PC-9 (cell line): ENCODE measurements at regions of chr1 and their contacts with region 1.

Region 1: GRCh38 chr1:226062558-226063223 is at the start of gene H3-3A:
- DNase-seq: peak; percentile 78 to 99
- H3K4me3 ChIP-seq: peak within 1 kb of the TSS; percentile 95
- H3K27ac ChIP-seq: peak within 1 kb of the TSS; percentile 94
- H3K4me1 ChIP-seq: peaks cover 23% of the 10 kb centered on the region
- H3K27me3 ChIP-seq: no peaks in the 10 kb centered on the region
- CTCF ChIP-seq: 0 out of 2 replicates have a peak, but pooled peaks have one; percentile 11
- total RNA-seq, gene H3-3A: 404 and 584 TPM in 2 replicates

Region 2: DNA sequence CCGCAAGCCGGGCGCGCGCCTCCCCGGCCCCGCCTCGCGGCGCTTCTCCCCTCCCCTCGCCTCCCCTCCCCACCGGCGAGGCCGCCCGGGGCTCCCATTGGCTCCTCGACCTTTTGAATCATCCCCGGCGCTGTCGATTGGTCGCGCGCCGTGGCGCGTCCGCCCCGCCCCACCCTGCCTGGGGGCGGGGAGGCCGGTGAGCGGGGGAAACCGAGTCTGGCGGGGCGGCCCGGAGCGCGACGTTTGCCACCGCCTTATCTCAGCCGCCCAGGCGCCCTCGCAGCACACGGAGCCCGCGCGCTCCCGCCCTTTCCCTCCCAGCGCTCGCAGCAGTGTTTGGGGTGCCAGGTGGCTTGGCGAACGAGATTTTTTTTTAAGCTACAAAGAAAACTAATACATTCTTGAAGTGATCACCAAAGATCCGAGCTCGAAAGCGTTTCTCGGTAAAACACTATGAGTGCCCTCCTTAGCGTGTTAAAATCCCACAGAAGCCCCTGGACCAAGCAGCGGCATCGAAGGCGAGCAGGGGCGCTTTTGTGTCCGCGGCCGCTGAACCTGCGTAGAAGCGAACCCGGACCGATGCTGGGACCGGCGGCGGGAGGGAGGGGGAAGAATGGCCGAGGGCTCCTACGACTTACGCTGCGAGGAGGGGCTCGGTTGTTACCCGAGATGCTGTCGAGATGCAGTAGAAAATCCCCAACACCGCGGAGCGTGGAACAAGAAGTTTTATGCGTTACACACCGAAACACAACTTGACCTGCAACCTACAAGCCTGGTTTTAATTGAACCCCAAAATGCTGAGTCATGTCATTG is 634.4 kb before region 1 on chr1:
- CTCF ChIA-PET with region 1: interaction called, 3 read pairs
- POLR2A ChIA-PET with region 1: interaction called, 6 read pairs
- intact Hi-C with region 1: loop called (anchors 5 kb)
- DNase-seq: peak; percentile 87 to 95
- H3K4me3 ChIP-seq: peak overlapping the region; percentile 94
- H3K27ac ChIP-seq: peak overlapping the region; percentile 98
- H3K4me1 ChIP-seq: peaks cover 44% of the 10 kb centered on the region
- H3K27me3 ChIP-seq: no peaks in the 10 kb centered on the region
- CTCF ChIP-seq: no peak

Region 3: GRCh38 chr1:225777583-225778336 is 284.9 kb before region 1 on chr1 and contains the start of gene SRP9:
- CTCF ChIA-PET with region 1: no interaction called
- POLR2A ChIA-PET with region 1: interaction called, 18 read pairs
- intact Hi-C with region 1: no loop called
- DNase-seq: peak; percentile 95 to 100
- H3K4me3 ChIP-seq: peak within 1 kb of the TSS; percentile 80
- H3K27ac ChIP-seq: peak within 1 kb of the TSS; percentile 84
- H3K4me1 ChIP-seq: peaks cover 32% of the 10 kb centered on the region
- H3K27me3 ChIP-seq: no peaks in the 10 kb centered on the region
- CTCF ChIP-seq: peak; percentile 86
- total RNA-seq, gene SRP9: 291 and 406 TPM in 2 replicates

Region 4: GRCh38 chr1:225962440-225962975 is 100.2 kb before region 1 on chr1:
- CTCF ChIA-PET with region 1: no interaction called
- POLR2A ChIA-PET with region 1: interaction called, 10 read pairs
- intact Hi-C with region 1: no loop called
- DNase-seq: peak in 1 of 2 experiments; percentile 20
- H3K4me3 ChIP-seq: no peak overlapping the region
- H3K27ac ChIP-seq: no peak overlapping the region
- H3K4me1 ChIP-seq: no peaks in the 10 kb centered on the region
- H3K27me3 ChIP-seq: no peaks in the 10 kb centered on the region
- CTCF ChIP-seq: peak; percentile 42; the same call in 1 of the 2 replicates

Region 5: DNA sequence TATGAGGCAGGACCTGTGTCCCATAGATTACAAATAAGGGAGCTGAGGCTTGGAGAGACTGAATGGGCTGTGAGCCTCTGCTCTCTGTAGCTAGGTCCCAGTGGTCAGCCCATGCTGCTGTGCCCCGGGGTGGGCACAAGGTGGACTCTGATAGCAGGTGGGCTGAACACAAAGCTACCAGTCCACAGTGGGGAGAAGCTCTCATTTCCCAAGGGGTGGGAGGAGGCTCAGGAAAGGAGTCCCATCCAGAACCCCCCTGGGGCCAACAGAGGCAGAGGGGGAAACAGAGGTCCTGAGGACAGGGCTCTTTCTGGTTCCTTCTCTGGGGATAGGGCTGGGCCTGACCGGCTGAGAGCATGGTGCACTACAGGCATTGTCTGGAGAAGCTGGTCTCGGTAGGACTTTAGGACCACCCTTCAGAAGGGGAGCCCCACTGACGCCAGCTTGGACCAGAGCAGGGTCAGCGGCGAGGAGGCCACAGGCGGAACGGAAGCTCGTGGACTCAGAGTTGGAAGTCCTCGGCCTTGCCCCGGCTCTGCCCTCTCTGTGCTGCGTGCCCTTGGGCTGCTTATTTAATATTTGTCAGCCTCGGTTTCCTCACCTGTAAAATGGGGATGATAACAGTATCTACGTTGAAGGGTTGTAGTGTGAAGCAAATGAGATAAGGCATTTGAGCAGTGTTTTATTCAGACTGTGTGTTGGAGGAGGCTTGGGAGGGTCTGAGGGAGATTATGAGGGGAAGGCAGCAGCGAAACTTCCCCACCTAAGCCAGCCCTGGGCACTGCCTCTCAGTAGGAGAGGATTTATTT is 90.1 kb before region 1 on chr1:
- CTCF ChIA-PET with region 1: no interaction called
- POLR2A ChIA-PET with region 1: no interaction called
- intact Hi-C with region 1: no loop called
- DNase-seq: no peak
- H3K4me3 ChIP-seq: no peak overlapping the region
- H3K27ac ChIP-seq: no peak overlapping the region
- H3K4me1 ChIP-seq: no peaks in the 10 kb centered on the region
- H3K27me3 ChIP-seq: no peaks in the 10 kb centered on the region
- CTCF ChIP-seq: no peak

Region 6: GRCh38 chr1:226006686-226007085 is 56.0 kb before region 1 on chr1:
- CTCF ChIA-PET with region 1: interaction called, 3 read pairs
- POLR2A ChIA-PET with region 1: interaction called, 33 read pairs
- intact Hi-C with region 1: no loop called
- DNase-seq: no peak
- H3K4me3 ChIP-seq: no peak overlapping the region
- H3K27ac ChIP-seq: no peak overlapping the region
- H3K4me1 ChIP-seq: peaks cover 12% of the 10 kb centered on the region
- H3K27me3 ChIP-seq: no peaks in the 10 kb centered on the region
- CTCF ChIP-seq: no peak

Region 7: DNA sequence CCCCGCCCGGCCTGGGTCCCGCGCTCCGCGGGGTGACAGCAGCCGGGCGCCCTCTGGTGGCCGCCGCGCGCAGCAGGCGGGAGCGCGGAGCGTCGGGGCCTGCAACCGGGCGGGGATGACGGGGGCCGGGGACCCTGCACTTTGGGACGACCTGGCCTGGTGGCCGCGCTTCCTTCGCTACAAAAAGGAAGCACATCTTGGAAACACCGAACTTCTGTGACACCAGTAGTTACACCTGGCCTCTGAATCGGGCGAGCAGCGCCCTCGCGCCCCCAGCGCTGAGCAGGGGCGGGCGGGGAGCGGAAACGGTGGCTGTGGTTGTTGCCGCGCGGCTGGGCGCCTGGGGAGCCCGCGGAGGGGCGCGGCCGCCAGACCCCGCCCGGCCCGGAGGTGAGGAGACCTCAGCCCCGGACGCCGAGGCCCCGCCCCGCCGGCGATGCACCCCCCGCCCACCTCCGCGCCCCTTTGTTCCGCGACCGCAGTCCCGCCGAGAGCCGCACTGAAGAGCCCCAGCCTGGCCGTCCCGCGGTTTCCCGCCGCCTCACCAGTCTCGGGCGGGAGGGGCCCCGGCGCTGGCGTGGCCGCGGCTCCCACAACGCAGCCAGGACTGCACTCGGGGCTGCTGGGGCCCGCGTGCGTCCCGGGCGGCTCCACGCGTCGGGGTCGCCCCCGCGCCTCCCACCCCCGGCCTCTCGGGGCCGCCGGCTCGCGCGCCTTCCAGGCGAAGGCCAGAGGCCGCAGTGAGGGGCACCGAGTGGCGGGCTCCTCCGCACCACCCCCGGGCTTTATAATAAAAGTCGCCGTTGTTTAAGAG is 59.1 kb after region 1 on chr1:
- CTCF ChIA-PET with region 1: interaction called, 50 read pairs
- POLR2A ChIA-PET with region 1: interaction called, 23 read pairs
- intact Hi-C with region 1: loop called (anchors 1 kb)
- DNase-seq: peak in 1 of 2 experiments; percentile 85
- H3K4me3 ChIP-seq: peak overlapping the region; percentile 79
- H3K27ac ChIP-seq: peak overlapping the region; percentile 74
- H3K4me1 ChIP-seq: peaks cover 26% of the 10 kb centered on the region
- H3K27me3 ChIP-seq: no peaks in the 10 kb centered on the region
- CTCF ChIP-seq: peak; percentile 71

Region 8: GRCh38 chr1:226332947-226333346 is 270.3 kb after region 1 on chr1:
- CTCF ChIA-PET with region 1: interaction called, 6 read pairs
- POLR2A ChIA-PET with region 1: no interaction called
- intact Hi-C with region 1: loop called (anchors 5 kb)
- DNase-seq: peak in 1 of 2 experiments; percentile 29
- H3K4me3 ChIP-seq: peak overlapping the region; percentile 49
- H3K27ac ChIP-seq: no peak overlapping the region
- H3K4me1 ChIP-seq: peaks cover 12% of the 10 kb centered on the region
- H3K27me3 ChIP-seq: no peaks in the 10 kb centered on the region
- CTCF ChIP-seq: no peak